ENCODE measurements at regions of chr3 and their contacts with region 1.

Region 1: GRCh38 chr3:142279965-142280590 is 54.7 kb upstream of the GK5 start:
- DNase-seq: peak in 1 of 2 donors; percentile 22
- ATAC-seq: peak; percentile 85 to 86
- H3K4me3 ChIP-seq: no peak overlapping the region
- H3K27ac ChIP-seq: no peak overlapping the region
- H3K4me1 ChIP-seq: no peaks in the 10 kb centered on the region
- H3K27me3 ChIP-seq: no peaks in the 10 kb centered on the region
- CTCF ChIP-seq: peak in 4 of 5 experiments; percentile 35 to 53 (median 48)
- POLR2A ChIP-seq: no peak

Region 2: DNA sequence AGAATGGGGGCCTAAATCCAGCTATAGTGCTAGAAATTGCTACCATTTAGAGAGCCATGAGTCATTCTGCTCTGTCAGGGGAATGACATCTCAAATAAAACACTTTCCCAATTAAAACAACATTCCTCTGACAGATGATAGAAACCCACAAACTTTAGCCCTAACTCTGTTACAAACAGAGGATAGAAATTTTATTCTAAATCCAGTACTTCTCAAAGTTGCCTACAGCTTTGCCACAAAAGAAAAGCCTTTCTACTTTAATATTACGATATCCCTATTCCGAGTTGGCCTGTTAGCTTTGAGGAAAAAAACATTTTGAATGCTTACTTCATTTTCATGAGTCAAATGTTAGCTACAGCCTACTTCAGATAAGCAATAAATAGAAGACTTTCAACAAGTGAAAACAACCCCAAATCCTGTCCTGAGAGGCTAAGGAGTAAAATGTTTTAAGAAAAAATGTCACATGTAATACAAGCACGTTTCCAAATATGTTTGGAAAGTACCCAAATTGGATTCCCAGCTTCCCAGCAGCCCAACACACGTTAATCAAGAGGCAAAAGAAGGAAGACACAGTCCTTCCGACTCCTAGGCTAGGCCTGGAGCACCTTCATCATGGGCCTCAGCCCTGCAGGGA is 320.0 kb before region 1 on chr3:
- in situ Hi-C with region 1: loop called (anchors 5 to 25 kb)
- intact Hi-C with region 1: loop called (anchors 1 kb)
- DNase-seq: no peak
- ATAC-seq: no peak
- H3K4me3 ChIP-seq: no peak overlapping the region
- H3K27ac ChIP-seq: peak overlapping the region in 3 of 4 donors; percentile 3 to 23 (median 4)
- H3K4me1 ChIP-seq: no peaks in the 10 kb centered on the region
- H3K27me3 ChIP-seq: no peaks in the 10 kb centered on the region
- CTCF ChIP-seq: no peak
- POLR2A ChIP-seq: no peak

Region 3: GRCh38 chr3:142129516-142130171 is 150.4 kb before region 1 on chr3:
- in situ Hi-C with region 1: loop called in 1 of 4 experiments (anchors 10 kb)
- intact Hi-C with region 1: loop called (anchors 10 kb)
- DNase-seq: no peak
- ATAC-seq: no peak
- H3K4me3 ChIP-seq: no peak overlapping the region
- H3K27ac ChIP-seq: no peak overlapping the region
- H3K4me1 ChIP-seq: no peaks in the 10 kb centered on the region
- H3K27me3 ChIP-seq: no peaks in the 10 kb centered on the region
- CTCF ChIP-seq: no peak
- POLR2A ChIP-seq: no peak

Region 4: DNA sequence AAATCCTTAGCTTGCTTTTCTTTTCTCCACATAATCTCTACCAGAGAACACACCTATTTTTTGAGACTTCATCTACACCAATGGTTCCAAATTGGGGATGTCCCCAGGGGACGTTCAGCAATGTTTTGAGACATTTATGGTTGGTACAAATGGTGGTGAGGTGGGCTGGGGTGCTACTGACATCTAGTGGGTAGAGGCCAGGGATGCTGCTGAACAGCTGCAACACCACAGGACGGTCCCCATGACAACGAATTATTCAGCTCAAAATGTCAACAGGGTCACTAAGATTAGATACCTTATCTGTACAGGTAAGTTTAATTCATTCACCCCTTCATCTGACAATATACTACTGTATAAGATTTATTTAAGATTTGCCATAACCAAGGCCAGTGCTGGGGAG is 69.0 kb before region 1 on chr3:
- in situ Hi-C with region 1: no loop called
- intact Hi-C with region 1: no loop called
- DNase-seq: no peak
- ATAC-seq: no peak
- H3K4me3 ChIP-seq: no peak overlapping the region
- H3K27ac ChIP-seq: no peak overlapping the region
- H3K4me1 ChIP-seq: no peaks in the 10 kb centered on the region
- H3K27me3 ChIP-seq: no peaks in the 10 kb centered on the region
- CTCF ChIP-seq: no peak
- POLR2A ChIP-seq: no peak

Region 5: GRCh38 chr3:142315083-142315482 is 35.0 kb after region 1 on chr3:
- in situ Hi-C with region 1: no loop called
- intact Hi-C with region 1: no loop called
- DNase-seq: no peak
- ATAC-seq: no peak
- H3K4me3 ChIP-seq: no peak overlapping the region
- H3K27ac ChIP-seq: no peak overlapping the region
- H3K4me1 ChIP-seq: no peaks in the 10 kb centered on the region
- H3K27me3 ChIP-seq: no peaks in the 10 kb centered on the region
- CTCF ChIP-seq: no peak
- POLR2A ChIP-seq: no peak